Breast epithelium (tissue), 4 donors: ENCODE measurements at regions of chr2 and their contacts with region 1.

Region 1: GRCh38 chr2:226934546-226935201 is 98.8 kb downstream of the RHBDD1 start:
- DNase-seq: no peak
- H3K4me3 ChIP-seq: no peak overlapping the region
- H3K27ac ChIP-seq: no peak overlapping the region
- H3K4me1 ChIP-seq: no peaks in the 10 kb centered on the region
- H3K27me3 ChIP-seq: no peaks in the 10 kb centered on the region
- CTCF ChIP-seq: no peak
- POLR2A ChIP-seq: no peak

Region 2: DNA sequence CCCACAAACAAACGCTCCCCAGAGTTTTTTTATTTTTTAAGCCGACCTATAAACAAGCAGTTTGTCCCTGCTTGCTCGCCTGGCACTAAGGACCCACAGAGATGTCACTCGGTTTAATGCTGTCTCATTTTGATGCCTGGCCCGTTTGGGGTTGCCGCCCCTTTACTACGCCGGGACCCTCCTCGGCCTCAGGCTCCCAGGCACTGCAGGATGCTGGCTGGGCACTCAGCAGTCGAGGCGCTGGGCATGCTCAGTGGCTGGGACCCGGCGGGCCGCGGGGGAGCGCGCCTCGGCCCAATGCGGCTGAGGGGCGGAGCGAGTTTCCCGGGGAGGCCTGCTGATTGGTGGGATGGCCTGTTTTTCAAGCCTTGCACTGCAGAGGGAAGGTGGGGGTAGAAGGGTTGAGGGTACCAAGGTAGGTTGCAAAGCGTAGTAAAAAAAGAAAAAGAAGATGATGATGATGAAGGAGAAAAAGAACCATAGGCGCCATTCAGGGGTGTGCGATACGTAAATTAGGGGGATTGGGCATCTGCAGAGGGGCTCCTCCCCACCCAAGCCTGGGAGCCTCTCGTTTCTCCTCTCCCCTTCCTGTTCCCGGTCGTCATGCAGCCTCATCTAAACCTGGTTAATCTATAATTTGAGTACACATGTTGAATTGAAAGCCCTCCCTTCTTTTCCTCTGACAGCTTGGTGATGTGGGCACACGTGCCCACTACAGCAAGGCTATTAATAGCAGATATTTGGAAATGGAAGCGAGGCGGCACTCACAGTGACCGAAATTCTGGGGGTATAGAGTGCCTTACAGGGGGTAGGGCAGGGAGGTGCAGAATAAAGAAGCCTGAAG is 133.5 kb before region 1 on chr2:
- intact Hi-C with region 1: loop called (anchors 5 kb)
- DNase-seq: peak; percentile 75 to 77
- H3K4me3 ChIP-seq: peak overlapping the region in 2 of 3 donors; percentile 87 to 88
- H3K27ac ChIP-seq: peak overlapping the region; percentile 95 to 97
- H3K4me1 ChIP-seq: peaks cover 0 to 2% of the 10 kb centered on the region in 2 donors
- H3K27me3 ChIP-seq: no peaks in the 10 kb centered on the region
- CTCF ChIP-seq: no peak
- POLR2A ChIP-seq: no peak

Region 3: GRCh38 chr2:226984750-226985582 is 50.3 kb after region 1 on chr2:
- intact Hi-C with region 1: no loop called
- DNase-seq: peak in 1 of 2 donors; percentile 37
- H3K4me3 ChIP-seq: peak overlapping the region in 1 of 3 donors; percentile 10
- H3K27ac ChIP-seq: peak overlapping the region; percentile 62 to 83
- H3K4me1 ChIP-seq: no peaks in the 10 kb centered on the region
- H3K27me3 ChIP-seq: no peaks in the 10 kb centered on the region
- CTCF ChIP-seq: peak; percentile 63 to 84 (median 81)
- POLR2A ChIP-seq: no peak

Region 4: DNA sequence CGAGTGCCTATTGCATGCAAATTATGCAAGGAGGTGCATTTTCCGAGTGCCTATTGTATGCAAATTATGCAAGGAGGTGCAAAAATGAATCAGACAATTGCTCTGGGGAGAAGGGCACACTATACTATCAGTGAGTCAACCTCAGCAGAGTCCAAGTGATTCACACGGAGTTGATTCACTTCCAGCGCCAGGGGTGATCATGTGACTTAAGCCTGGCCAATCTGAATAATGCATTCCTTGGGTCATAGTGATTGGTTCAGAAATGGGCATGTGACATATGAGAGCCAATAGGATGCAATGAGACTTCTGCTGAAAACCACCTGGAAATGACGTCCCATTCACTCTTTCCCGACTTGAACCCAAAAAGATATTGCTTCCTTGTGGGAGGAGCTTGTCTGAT is 1088.9 kb after region 1 on chr2:
- intact Hi-C with region 1: no loop called
- DNase-seq: no peak
- H3K4me3 ChIP-seq: no peak overlapping the region
- H3K27ac ChIP-seq: no peak overlapping the region
- H3K4me1 ChIP-seq: no peaks in the 10 kb centered on the region
- H3K27me3 ChIP-seq: no peaks in the 10 kb centered on the region
- CTCF ChIP-seq: no peak
- POLR2A ChIP-seq: no peak

Region 5: DNA sequence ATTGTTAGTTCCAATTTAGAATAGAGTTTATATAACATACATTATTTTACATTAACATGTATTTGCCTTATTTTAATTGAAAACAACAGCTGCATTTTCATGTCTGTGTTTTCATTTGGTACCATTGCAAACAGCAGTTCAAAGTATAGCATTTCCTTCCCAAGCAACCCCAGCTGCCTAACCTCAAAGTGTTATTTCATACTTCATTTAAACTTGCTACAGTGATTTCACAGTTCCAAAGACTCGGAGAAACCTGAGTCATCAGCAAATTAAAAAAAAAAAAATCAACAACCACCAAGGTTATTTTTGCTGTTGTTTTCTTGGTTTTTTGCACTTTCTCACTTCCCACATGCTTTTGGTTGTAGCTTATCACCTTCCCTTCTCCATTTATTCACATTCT is 1483.3 kb after region 1 on chr2:
- intact Hi-C with region 1: no loop called
- DNase-seq: no peak
- H3K4me3 ChIP-seq: no peak overlapping the region
- H3K27ac ChIP-seq: no peak overlapping the region
- H3K4me1 ChIP-seq: no peaks in the 10 kb centered on the region
- H3K27me3 ChIP-seq: no peaks in the 10 kb centered on the region
- CTCF ChIP-seq: no peak
- POLR2A ChIP-seq: no peak